GM10248 (cell line): ENCODE measurements at regions of chr16 and their contacts with region 1.

Region 1: DNA sequence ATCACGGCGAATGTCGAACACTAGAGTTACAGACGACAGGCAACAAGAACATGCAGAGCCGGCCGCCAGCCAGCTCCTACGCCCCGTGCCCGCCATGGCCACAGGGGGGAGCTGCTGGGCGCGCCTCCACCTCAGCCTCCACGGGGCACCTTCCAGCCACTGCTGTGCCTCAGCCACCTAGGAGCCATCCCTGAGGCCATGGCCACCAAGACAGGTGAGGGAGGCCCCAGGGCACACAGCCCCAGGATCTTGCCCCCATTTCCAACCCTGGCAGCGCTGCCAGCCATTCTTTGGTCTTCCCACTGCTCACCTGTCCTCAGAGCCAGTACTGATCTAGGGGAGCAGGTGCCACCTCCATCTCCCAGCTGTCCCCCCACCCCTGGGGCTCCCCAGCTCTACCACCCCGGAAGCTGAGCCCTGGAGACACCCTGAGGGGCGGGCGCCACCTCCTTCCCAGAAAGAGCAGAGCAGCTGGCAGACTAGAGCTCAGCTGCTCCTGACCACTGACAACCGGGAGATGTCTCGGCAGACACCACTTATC is 11.8 kb downstream of the GNPTG start:
- DNase-seq: peak; percentile 87
- CTCF ChIP-seq: peak; percentile 90

Region 2: GRCh38 chr16:951660-952301 is 411.8 kb before region 1 on chr16:
- CTCF ChIA-PET with region 1: no interaction called
- POLR2A ChIA-PET with region 1: no interaction called
- DNase-seq: no peak
- CTCF ChIP-seq: no peak

Region 3: GRCh38 chr16:1342526-1343427 is 20.8 kb before region 1 on chr16:
- CTCF ChIA-PET with region 1: interaction called, 16 read pairs
- POLR2A ChIA-PET with region 1: no interaction called
- DNase-seq: peak; percentile 100
- CTCF ChIP-seq: no peak

Region 4: GRCh38 chr16:1378804-1379303 is 15.3 kb after region 1 on chr16:
- CTCF ChIA-PET with region 1: interaction called, 56 read pairs
- POLR2A ChIA-PET with region 1: no interaction called
- DNase-seq: peak; percentile 73
- CTCF ChIP-seq: no peak